ENCODE measurements at regions of chr11 and their contacts with region 1.

Region 1: GRCh38 chr11:12888525-12889158 is 120.5 kb upstream of the RASSF10 start:
- DNase-seq: peak; percentile 94

Region 2: GRCh38 chr11:12599408-12600143 is 289.1 kb before region 1 on chr11:
- intact Hi-C with region 1: loop called in 1 of 2 experiments (anchors 10 kb)
- DNase-seq: peak; percentile 88

Region 3: GRCh38 chr11:12673924-12674570 is 214.6 kb before region 1 on chr11 and contains the start of gene TEAD1:
- intact Hi-C with region 1: loop called in 1 of 2 experiments (anchors 5 kb)
- DNase-seq: peak; percentile 98
- total RNA-seq, gene TEAD1: 56.5 to 59.2 TPM

Region 4: GRCh38 chr11:13207665-13208594 is 319.3 kb after region 1 on chr11:
- intact Hi-C with region 1: no loop called
- DNase-seq: no peak